ENCODE measurements at regions of chr3 and their contacts with region 1.

Region 1: GRCh38 chr3:187223799-187224198 is 26.5 kb downstream of the RTP1 start:
- DNase-seq: peak; percentile 71
- ATAC-seq: peak; percentile 33
- H3K4me3 ChIP-seq: no peak overlapping the region
- H3K27ac ChIP-seq: no peak overlapping the region
- H3K4me1 ChIP-seq: peaks cover 19% of the 10 kb centered on the region
- H3K27me3 ChIP-seq: no peaks in the 10 kb centered on the region
- CTCF ChIP-seq: no peak

Region 2: DNA sequence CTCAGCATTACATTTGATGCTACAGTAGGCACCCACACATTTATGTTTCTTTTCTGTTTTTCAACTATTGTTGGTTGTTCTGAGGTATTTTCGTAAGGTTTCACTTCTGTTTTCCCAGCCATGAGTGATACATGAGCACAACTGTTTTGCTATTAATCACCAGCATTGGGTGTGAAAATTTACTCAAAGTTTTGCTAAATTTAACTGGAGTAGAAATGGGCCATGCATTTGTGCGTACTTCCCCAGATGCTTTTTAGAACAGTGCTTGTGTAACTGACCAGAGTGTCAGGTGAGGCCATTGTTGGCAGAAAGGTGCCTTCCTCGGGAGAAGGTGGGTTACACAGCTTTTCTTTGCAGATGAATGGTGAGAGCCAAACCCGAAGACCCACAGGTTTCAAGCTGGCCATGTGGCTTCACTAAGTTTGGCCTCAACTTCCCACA is 223.1 kb before region 1 on chr3:
- CTCF ChIA-PET with region 1: no interaction called
- POLR2A ChIA-PET with region 1: no interaction called
- intact Hi-C with region 1: no loop called
- DNase-seq: no peak
- ATAC-seq: no peak
- H3K4me3 ChIP-seq: no peak overlapping the region
- H3K27ac ChIP-seq: peak overlapping the region; percentile 53
- H3K4me1 ChIP-seq: peaks cover 13% of the 10 kb centered on the region; the same call in 1 of the 2 replicates
- H3K27me3 ChIP-seq: no peaks in the 10 kb centered on the region
- CTCF ChIP-seq: no peak

Region 3: GRCh38 chr3:187236963-187237362 is 13.2 kb after region 1 on chr3:
- CTCF ChIA-PET with region 1: no interaction called
- POLR2A ChIA-PET with region 1: no interaction called
- intact Hi-C with region 1: no loop called
- DNase-seq: no peak
- ATAC-seq: no peak
- H3K4me3 ChIP-seq: no peak overlapping the region
- H3K27ac ChIP-seq: no peak overlapping the region
- H3K4me1 ChIP-seq: no peaks in the 10 kb centered on the region
- H3K27me3 ChIP-seq: peaks cover 5% of the 10 kb centered on the region; the same call in 1 of the 2 replicates
- CTCF ChIP-seq: no peak

Region 4: GRCh38 chr3:187247398-187247797 is 23.6 kb after region 1 on chr3:
- CTCF ChIA-PET with region 1: interaction called, 10 read pairs
- POLR2A ChIA-PET with region 1: no interaction called
- intact Hi-C with region 1: no loop called
- DNase-seq: no peak
- ATAC-seq: no peak
- H3K4me3 ChIP-seq: no peak overlapping the region
- H3K27ac ChIP-seq: no peak overlapping the region
- H3K4me1 ChIP-seq: no peaks in the 10 kb centered on the region
- H3K27me3 ChIP-seq: no peaks in the 10 kb centered on the region; the same call in 1 of the 2 replicates
- CTCF ChIP-seq: no peak

Region 5: GRCh38 chr3:187295316-187296034 is 71.7 kb after region 1 on chr3:
- CTCF ChIA-PET with region 1: no interaction called
- POLR2A ChIA-PET with region 1: no interaction called
- intact Hi-C with region 1: loop called (anchors 1 kb)
- DNase-seq: peak; percentile 49
- ATAC-seq: no peak
- H3K4me3 ChIP-seq: peak overlapping the region; percentile 21; the same call in 1 of the 2 replicates
- H3K27ac ChIP-seq: no peak overlapping the region
- H3K4me1 ChIP-seq: no peaks in the 10 kb centered on the region; the same call in 1 of the 2 replicates
- H3K27me3 ChIP-seq: peaks cover 11% of the 10 kb centered on the region; the same call in 1 of the 2 replicates
- CTCF ChIP-seq: peak; percentile 64

Region 6: GRCh38 chr3:187382609-187383151 is 158.9 kb after region 1 on chr3:
- CTCF ChIA-PET with region 1: no interaction called
- POLR2A ChIA-PET with region 1: no interaction called
- intact Hi-C with region 1: no loop called
- DNase-seq: no peak
- ATAC-seq: no peak
- H3K4me3 ChIP-seq: no peak overlapping the region
- H3K27ac ChIP-seq: no peak overlapping the region
- H3K4me1 ChIP-seq: no peaks in the 10 kb centered on the region
- H3K27me3 ChIP-seq: peaks cover 68% of the 10 kb centered on the region
- CTCF ChIP-seq: no peak

Region 7: DNA sequence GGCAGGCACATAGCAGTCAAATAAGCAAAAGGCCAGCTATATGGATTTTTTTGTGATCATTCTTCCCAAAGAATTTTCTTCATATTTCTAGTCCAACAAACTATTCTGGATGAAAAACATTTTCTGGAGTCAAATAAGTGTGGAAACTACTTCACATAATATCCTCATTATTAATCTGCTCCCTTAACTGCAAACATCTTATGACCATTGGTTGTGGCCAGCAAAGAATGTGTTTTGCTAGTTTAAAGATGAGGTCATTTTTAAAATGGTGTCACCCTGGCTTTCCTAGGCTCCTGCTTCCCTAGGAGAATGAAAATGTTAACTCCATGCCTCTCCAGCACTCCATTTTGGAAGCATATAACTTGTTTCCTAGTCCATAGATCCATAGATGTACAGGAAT is 327.6 kb after region 1 on chr3:
- CTCF ChIA-PET with region 1: no interaction called
- POLR2A ChIA-PET with region 1: no interaction called
- intact Hi-C with region 1: no loop called
- DNase-seq: no peak
- ATAC-seq: no peak
- H3K4me3 ChIP-seq: no peak overlapping the region
- H3K27ac ChIP-seq: no peak overlapping the region
- H3K4me1 ChIP-seq: no peaks in the 10 kb centered on the region
- H3K27me3 ChIP-seq: peaks cover 63% of the 10 kb centered on the region
- CTCF ChIP-seq: no peak

Region 8: DNA sequence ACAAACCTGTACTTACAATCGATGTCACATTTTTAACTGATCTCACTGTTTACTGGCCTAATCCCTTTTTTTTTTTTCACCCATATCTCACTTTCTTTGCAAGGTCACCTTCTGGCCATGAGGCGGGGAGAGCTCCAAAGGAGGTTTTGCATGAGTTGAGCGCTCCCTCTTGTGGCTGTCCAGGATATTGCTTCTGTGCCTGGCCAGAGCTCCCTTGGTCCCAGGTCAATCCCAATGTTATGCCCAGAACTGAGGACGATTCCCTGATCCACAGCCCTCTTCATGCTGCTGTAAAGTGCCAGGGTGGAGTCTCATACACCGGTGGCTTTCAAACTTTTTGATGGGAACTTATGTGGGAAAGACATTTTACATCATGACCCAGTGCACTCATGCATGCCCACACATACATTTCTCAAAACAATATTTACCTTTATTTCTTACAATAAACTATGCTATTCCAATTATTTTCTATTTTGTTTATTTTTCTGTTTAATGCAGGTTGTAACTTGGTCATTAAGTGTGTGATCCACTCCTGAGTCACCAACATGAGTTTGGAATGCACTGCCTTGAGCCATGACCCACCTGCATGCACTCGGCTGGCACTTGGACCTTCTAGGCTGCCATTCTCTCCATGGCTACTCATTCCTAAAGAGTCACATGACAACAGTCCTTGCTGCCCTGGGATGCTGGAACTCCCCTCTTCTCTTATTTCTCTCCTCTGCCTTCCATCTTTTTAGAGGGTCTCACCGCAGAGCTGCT is 456.0 kb after region 1 on chr3:
- CTCF ChIA-PET with region 1: interaction called, 54 read pairs
- POLR2A ChIA-PET with region 1: no interaction called
- intact Hi-C with region 1: loop called (anchors 1 kb)
- DNase-seq: peak; percentile 87
- ATAC-seq: peak; percentile 87
- H3K4me3 ChIP-seq: no peak overlapping the region
- H3K27ac ChIP-seq: no peak overlapping the region
- H3K4me1 ChIP-seq: no peaks in the 10 kb centered on the region
- H3K27me3 ChIP-seq: peaks cover 41% of the 10 kb centered on the region
- CTCF ChIP-seq: peak; percentile 92

Region 9: GRCh38 chr3:187714404-187714979 is 490.7 kb after region 1 on chr3:
- CTCF ChIA-PET with region 1: interaction called, 8 read pairs
- POLR2A ChIA-PET with region 1: no interaction called
- intact Hi-C with region 1: loop called (anchors 1 kb)
- DNase-seq: peak; percentile 92
- ATAC-seq: peak; percentile 87
- H3K4me3 ChIP-seq: no peak overlapping the region
- H3K27ac ChIP-seq: no peak overlapping the region
- H3K4me1 ChIP-seq: peaks cover 7% of the 10 kb centered on the region; the same call in 1 of the 2 replicates
- H3K27me3 ChIP-seq: no peaks in the 10 kb centered on the region
- CTCF ChIP-seq: peak; percentile 97

Measured in PC-3 (cell line).